Breast epithelium (tissue), 4 donors: ENCODE measurements at regions of chr1 and their contacts with region 1.

Region 1: DNA sequence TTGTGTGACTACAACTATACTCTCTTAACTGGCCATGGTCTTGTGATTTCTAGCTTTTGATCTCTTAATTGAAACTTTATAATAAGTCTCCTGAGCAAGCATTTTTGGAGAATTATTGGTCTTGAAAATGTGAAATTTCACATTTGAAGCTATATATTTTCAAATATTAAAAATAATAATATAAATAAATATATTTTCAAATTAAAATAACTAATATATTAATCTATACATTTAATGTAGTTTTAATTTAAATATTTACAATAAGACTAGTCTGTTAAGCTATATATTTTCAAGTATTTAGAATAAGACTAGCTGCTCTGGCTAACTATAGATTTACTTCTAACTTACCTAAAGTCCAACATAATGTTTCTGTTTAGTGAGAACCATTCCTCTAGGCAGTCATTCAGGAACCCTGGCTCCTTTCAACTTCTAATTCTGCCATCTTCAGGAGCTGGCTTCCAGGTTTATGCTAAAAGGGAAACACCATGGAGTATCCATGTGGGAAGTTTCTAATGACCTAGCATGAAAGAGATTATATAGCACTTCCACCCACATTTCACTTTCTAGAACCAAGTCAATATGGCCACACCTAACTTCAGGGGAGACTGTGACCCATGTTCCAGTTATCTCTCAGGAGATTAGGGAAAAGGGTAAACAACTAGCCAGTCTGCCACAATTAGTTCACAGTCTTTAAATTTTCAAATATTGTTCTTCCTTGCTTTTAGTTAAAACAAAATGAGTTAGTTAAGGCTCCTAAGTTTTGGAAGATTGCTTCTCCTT is 31.9 kb upstream of the TSHB start:
- DNase-seq: no peak
- H3K4me3 ChIP-seq: no peak overlapping the region
- H3K27ac ChIP-seq: no peak overlapping the region
- H3K4me1 ChIP-seq: no peaks in the 10 kb centered on the region
- H3K27me3 ChIP-seq: no peaks in the 10 kb centered on the region
- CTCF ChIP-seq: no peak
- POLR2A ChIP-seq: no peak

Region 2: DNA sequence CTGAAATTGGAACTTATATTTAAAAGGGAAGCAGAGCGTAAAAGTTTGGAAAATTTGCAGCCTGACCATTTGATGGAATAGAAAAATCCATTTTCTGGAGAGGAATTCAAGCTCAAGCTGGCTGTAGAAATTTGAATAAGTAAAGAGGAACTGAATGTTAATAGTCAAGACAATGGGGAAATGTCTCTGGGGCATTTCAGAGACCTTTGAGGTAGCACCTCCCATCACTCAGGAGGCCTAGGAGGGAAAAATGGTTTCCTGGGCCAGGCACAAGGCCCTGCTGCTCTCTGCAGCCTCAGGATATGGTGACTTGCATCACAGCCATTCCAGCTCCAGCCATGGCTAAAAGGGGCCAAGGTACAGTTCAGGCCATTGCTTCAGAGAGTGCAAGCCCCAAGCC is 14.3 kb after region 1 on chr1:
- intact Hi-C with region 1: loop called (anchors 1 kb)
- DNase-seq: no peak
- H3K4me3 ChIP-seq: no peak overlapping the region
- H3K27ac ChIP-seq: no peak overlapping the region
- H3K4me1 ChIP-seq: no peaks in the 10 kb centered on the region
- H3K27me3 ChIP-seq: no peaks in the 10 kb centered on the region
- CTCF ChIP-seq: no peak
- POLR2A ChIP-seq: no peak

Region 3: DNA sequence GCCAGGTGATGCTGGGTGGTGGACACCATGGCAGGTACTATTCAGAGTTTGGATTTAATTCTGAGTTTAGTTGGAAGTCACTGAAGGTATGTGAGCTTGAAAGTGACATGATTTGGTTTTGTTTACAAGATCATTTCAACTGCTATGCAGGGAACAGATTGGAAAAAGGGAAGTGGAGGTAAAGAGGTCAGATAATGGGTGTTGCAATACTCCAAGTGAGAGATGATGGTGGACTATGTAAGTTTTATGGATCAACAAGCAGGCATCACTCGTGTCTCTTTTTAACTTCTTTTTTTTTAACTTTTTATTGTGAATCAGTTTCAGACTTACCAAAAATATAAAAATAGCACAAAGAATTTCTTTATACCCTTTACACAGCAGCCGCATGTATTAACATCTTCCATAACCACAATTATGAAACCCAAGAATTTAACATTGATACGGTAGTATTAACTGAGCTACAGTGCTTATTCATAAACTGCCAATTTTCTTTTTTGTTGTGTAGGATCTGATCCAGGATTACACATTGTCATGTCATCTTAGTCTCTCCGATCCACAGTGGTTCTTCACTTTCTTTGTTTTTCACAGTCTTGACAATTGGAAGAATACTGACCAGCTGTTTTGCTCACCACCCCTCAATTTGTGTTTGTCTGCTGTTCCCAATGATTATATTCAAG is 868.1 kb after region 1 on chr1:
- intact Hi-C with region 1: no loop called
- DNase-seq: no peak
- H3K4me3 ChIP-seq: no peak overlapping the region
- H3K27ac ChIP-seq: no peak overlapping the region
- H3K4me1 ChIP-seq: no peaks in the 10 kb centered on the region
- H3K27me3 ChIP-seq: no peaks in the 10 kb centered on the region
- CTCF ChIP-seq: no peak
- POLR2A ChIP-seq: no peak